ENCODE measurements at regions of chr1 and their contacts with region 1.

Region 1: DNA sequence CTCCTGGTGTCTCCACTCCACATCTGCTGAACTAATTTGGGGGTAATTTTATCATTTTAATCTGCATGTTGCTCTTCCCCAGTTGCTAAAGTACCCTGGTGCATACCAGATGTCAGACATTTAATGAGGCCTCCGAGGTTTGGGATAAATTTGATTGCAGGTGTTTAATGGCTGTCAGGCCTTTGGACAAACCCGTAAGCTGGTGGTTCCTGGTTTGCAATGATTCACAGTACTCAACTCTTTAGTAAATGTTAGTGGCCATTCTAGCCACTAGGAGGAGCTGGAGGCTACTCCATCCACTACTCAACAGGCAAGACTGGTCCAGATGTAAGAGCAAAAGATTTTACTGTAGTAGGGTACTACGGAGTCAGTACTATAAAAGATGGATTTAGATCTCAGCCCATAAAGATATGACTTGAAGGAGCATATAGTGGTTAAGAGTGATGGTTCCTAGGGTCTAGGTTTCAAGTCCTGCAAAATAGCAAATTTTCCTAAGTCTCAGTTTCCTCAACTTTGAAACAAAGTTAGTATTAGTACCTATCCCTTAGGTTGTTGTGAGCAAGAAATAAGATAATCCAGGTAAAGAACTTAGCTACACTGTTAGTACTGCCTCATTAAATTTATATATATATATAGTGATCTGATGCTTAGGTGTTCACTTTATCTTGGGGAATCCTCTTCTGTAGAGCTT is 132.8 kb downstream of the SNX7 start:
- DNase-seq: peak; percentile 56
- H3K4me3 Mint-ChIP-seq: no peak overlapping the region
- H3K27ac Mint-ChIP-seq: no peak overlapping the region
- H3K4me1 Mint-ChIP-seq: peaks cover 23% of the 10 kb centered on the region
- H3K27me3 Mint-ChIP-seq: no peaks in the 10 kb centered on the region

Region 2: DNA sequence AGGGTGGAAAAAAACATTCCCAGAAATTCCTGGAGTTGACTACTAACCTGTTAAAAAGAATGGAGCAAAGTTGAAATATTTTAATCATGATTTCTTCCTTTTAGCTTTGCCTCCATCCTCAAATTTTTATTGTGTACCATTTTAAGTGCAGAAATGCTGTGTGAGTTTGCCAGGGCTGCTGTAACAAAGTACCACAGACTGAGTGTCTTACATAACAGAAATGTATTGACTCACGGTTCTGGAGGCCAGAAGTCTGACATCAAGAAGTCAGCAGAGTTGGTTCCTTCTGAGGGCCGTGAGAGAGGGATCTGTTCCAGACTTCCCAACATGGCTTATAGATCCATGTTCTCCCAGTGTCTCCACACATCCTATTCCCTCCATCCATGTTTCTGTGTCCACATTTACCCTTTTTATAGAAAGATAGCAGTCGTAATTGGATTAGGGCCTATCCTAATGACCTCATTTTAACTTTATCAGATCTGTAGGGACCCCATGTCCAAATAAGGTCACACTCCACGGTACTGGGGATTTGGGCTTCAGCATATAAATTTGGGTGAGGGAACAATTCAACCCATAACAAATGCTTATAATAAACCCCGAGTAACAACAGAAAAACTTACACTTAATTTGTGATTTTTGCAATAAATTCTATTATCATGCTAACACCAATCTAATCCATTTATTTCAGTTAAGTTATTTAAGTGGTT is 120.1 kb before region 1 on chr1:
- CTCF ChIA-PET with region 1: no interaction called
- POLR2A ChIA-PET with region 1: no interaction called
- intact Hi-C with region 1: no loop called
- DNase-seq: no peak
- H3K4me3 Mint-ChIP-seq: no peak overlapping the region
- H3K27ac Mint-ChIP-seq: no peak overlapping the region
- H3K4me1 Mint-ChIP-seq: no peaks in the 10 kb centered on the region
- H3K27me3 Mint-ChIP-seq: no peaks in the 10 kb centered on the region

Region 3: DNA sequence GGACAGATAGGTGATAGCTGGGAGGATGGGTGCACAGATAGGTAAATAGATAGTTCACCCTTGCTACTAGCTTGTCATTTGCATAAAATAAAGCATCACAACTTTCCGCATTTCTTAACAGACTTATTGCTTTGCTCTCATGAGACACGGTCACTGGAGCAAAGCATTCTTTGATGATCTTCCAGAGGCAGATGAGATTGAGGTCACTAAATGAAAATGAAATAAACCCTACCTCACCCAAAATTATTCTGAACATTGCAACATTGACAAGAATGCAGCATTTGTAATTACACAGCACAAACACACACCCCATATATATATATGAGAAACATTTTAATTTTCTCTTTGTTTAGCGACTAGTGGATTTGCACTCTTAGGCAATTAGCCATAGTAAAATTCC is 25.2 kb before region 1 on chr1:
- CTCF ChIA-PET with region 1: no interaction called
- POLR2A ChIA-PET with region 1: no interaction called
- intact Hi-C with region 1: no loop called
- DNase-seq: no peak
- H3K4me3 Mint-ChIP-seq: no peak overlapping the region
- H3K27ac Mint-ChIP-seq: no peak overlapping the region
- H3K4me1 Mint-ChIP-seq: no peaks in the 10 kb centered on the region
- H3K27me3 Mint-ChIP-seq: peaks cover 5% of the 10 kb centered on the region

Region 4: GRCh38 chr1:98783821-98784220 is 10.5 kb before region 1 on chr1:
- CTCF ChIA-PET with region 1: interaction called, 10 read pairs
- POLR2A ChIA-PET with region 1: no interaction called
- intact Hi-C with region 1: no loop called
- DNase-seq: no peak
- H3K4me3 Mint-ChIP-seq: no peak overlapping the region
- H3K27ac Mint-ChIP-seq: no peak overlapping the region
- H3K4me1 Mint-ChIP-seq: no peaks in the 10 kb centered on the region
- H3K27me3 Mint-ChIP-seq: no peaks in the 10 kb centered on the region

Region 5: DNA sequence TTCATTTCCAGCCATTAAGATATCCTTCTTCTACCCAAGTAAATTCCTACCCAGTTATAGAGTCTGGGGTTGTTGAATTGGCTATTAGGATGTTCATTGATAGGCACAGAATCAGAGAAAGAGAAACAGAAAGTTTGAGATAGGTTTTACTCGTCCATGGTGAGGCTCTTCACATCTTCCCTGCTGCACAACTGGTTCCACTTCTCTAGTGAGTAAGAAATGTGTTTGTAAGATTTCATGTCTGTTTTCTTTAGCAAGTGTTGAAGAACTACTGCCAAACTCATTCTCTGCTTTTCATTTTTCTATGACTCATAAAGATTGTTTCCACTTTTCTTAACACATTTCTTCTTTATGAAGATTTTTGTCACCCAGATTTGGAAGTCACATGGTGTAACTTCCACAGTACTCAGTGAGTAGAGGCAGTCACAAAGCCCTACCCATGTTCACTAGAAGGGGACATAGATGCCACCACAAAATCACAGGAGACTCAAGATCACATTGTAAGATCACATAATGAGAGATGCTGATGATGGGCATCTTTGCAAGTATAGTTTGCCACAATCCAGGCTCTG is 19.5 kb after region 1 on chr1:
- CTCF ChIA-PET with region 1: no interaction called
- POLR2A ChIA-PET with region 1: no interaction called
- intact Hi-C with region 1: no loop called
- DNase-seq: no peak
- H3K4me3 Mint-ChIP-seq: peak overlapping the region; percentile 3
- H3K27ac Mint-ChIP-seq: peak overlapping the region; percentile 15
- H3K4me1 Mint-ChIP-seq: peaks cover 16% of the 10 kb centered on the region
- H3K27me3 Mint-ChIP-seq: no peaks in the 10 kb centered on the region

Region 6: DNA sequence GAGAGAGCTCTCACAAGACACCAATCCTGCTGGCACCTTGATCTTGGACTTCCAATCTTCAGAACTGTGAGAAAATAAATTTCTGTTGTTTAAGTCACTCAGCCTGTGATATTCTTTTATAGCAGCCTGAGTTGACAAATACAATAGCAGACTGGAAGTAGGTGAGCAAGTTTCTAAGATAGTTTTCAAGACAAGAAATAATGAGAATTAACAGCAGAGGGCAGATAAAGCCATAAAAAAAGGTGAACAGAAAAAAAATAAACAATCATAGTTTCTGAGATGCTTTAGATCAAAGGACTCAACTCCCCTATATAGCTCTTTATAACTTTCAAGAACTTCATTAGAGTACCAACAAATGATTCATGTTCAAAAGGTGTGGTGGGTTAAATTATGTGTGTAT is 90.5 kb after region 1 on chr1:
- CTCF ChIA-PET with region 1: no interaction called
- POLR2A ChIA-PET with region 1: no interaction called
- intact Hi-C with region 1: loop called (anchors 5 kb)
- DNase-seq: no peak
- H3K4me3 Mint-ChIP-seq: no peak overlapping the region
- H3K27ac Mint-ChIP-seq: no peak overlapping the region
- H3K4me1 Mint-ChIP-seq: no peaks in the 10 kb centered on the region
- H3K27me3 Mint-ChIP-seq: no peaks in the 10 kb centered on the region

Region 7: DNA sequence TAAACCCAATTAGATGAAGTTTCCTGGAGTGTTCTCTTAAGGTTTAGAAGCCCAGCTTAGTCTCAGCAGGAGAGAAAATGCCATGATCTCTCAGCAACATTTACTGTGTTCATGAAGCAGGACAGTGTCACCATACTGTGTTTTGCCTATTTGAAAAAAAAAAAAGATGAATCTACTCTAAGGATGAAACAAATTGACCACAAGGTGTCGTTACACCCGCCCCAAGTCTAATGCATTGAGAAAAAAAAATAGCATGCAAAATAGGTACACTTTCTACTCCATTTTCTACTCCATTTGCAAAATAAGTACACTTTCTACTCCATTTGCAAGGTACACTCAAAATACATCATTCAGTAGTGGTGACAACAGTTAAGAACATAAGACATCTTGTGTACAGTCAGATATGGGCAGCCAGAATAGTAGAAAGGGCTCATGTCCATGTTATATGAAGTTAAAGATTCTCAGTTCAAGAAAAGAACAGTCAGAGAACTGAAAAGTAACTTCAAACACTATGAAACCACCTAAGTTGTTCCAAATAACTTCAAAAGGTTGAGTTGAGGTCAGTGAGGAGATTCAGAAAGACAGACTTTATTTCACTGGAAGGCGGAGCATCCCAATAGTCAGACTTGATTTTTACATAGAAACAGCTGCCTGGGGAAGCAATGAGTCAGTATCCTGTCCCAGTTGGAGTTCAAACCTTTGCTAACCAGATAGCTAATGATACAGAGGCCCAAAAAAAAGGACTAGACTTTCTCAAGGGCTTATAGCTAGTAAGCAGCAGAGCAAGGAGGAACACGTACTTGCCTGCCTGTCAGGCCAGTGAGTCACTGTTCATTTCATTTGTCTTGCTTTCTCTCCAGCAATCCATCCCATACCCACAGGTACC is 197.0 kb after region 1 on chr1:
- CTCF ChIA-PET with region 1: interaction called, 3 read pairs
- POLR2A ChIA-PET with region 1: no interaction called
- intact Hi-C with region 1: loop called (anchors 10 kb)
- DNase-seq: no peak
- H3K4me3 Mint-ChIP-seq: no peak overlapping the region
- H3K27ac Mint-ChIP-seq: peak overlapping the region; percentile 42
- H3K4me1 Mint-ChIP-seq: peaks cover 8% of the 10 kb centered on the region
- H3K27me3 Mint-ChIP-seq: no peaks in the 10 kb centered on the region

Region 8: DNA sequence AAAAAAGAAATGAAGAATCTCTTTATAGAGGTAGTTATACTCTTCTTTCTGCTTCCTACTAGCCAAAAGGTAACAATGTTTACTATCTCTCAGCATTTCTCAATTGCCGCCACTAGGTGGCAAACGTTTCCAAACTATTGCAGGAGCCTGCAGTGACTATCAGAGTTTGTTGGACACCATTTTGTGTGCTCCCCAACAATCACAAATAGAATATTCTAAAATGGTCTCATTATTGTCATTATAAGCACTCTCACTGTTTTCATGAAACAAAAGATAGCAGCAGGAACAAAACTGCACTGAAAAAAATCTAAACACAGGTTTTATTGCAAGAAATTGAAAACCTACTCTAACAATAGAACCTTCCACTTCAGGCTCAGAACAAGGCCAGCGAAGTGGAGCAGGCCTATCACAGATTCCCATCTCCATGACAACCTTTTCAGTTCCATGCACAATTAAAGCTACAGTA is 386.0 kb after region 1 on chr1:
- CTCF ChIA-PET with region 1: interaction called, 10 read pairs
- POLR2A ChIA-PET with region 1: no interaction called
- intact Hi-C with region 1: loop called (anchors 1 kb)
- DNase-seq: peak; percentile 69
- H3K4me3 Mint-ChIP-seq: no peak overlapping the region
- H3K27ac Mint-ChIP-seq: no peak overlapping the region
- H3K4me1 Mint-ChIP-seq: no peaks in the 10 kb centered on the region
- H3K27me3 Mint-ChIP-seq: no peaks in the 10 kb centered on the region

Region 9: GRCh38 chr1:99264201-99265021 is 470.1 kb after region 1 on chr1 and contains the start of gene PLPPR4:
- CTCF ChIA-PET with region 1: no interaction called
- POLR2A ChIA-PET with region 1: no interaction called
- intact Hi-C with region 1: no loop called
- DNase-seq: peak; percentile 25
- H3K4me3 Mint-ChIP-seq: no peak within 1 kb of the TSS
- H3K27ac Mint-ChIP-seq: no peak within 1 kb of the TSS
- H3K4me1 Mint-ChIP-seq: peaks cover 7% of the 10 kb centered on the region
- H3K27me3 Mint-ChIP-seq: peaks cover 42% of the 10 kb centered on the region
- total RNA-seq, gene PLPPR4: not detected

Region 10: DNA sequence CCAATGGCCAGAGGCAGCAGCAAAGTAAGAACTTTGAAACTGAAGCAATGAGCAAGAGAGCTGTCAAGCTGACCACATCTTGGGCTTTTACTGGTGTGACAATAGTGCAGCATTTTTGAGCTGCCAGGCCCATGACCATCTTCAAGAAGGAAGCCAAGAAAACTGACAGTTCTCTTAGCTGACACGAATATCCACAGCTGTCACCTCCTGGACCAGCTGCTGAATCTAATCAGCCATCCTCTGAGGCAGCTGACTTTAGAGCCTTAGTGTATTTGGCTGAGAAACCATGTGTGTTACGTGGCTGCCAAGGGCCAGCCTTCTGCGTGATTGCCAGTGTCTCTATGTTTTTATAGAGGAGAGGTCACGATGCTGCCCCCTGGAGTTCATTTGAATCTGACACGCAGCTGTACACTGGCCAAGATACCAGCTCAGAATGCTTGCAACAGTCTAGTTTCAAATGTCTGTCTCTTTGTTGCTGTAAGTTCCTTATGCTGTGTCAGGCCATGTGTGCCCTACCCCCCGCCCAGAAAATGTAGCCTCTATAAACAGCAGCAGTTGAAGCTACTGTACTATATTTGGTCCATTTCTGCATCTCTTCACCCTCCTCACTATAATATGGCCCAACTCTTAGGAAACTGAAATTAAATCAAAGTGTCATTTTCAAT is 891.3 kb after region 1 on chr1:
- CTCF ChIA-PET with region 1: interaction called, 11 read pairs
- POLR2A ChIA-PET with region 1: no interaction called
- intact Hi-C with region 1: no loop called
- DNase-seq: peak; percentile 63
- H3K4me3 Mint-ChIP-seq: no peak overlapping the region
- H3K27ac Mint-ChIP-seq: no peak overlapping the region
- H3K4me1 Mint-ChIP-seq: peaks cover 2% of the 10 kb centered on the region
- H3K27me3 Mint-ChIP-seq: peaks cover 10% of the 10 kb centered on the region

Measured in activated CD4-positive, alpha-beta memory T cell treated with anti-CD3 and anti-CD28 coated beads for 36 hours (primary cell).